ENCODE measurements at regions of chr12 and their contacts with region 1.

Region 1: GRCh38 chr12:109110988-109111495 is 5.3 kb upstream of the ACACB start:
- DNase-seq: peak; percentile 87
- ATAC-seq: peak; percentile 93 to 98
- H3K4me3 ChIP-seq: peak overlapping the region; percentile 44
- H3K27ac ChIP-seq: peak overlapping the region; percentile 85 to 90
- H3K4me1 ChIP-seq: peaks cover 11% of the 10 kb centered on the region
- CTCF ChIP-seq: no peak
- EP300 ChIP-seq: no peak
- POLR2A ChIP-seq: peak; percentile 78
- RAD21 ChIP-seq: no peak

Region 2: DNA sequence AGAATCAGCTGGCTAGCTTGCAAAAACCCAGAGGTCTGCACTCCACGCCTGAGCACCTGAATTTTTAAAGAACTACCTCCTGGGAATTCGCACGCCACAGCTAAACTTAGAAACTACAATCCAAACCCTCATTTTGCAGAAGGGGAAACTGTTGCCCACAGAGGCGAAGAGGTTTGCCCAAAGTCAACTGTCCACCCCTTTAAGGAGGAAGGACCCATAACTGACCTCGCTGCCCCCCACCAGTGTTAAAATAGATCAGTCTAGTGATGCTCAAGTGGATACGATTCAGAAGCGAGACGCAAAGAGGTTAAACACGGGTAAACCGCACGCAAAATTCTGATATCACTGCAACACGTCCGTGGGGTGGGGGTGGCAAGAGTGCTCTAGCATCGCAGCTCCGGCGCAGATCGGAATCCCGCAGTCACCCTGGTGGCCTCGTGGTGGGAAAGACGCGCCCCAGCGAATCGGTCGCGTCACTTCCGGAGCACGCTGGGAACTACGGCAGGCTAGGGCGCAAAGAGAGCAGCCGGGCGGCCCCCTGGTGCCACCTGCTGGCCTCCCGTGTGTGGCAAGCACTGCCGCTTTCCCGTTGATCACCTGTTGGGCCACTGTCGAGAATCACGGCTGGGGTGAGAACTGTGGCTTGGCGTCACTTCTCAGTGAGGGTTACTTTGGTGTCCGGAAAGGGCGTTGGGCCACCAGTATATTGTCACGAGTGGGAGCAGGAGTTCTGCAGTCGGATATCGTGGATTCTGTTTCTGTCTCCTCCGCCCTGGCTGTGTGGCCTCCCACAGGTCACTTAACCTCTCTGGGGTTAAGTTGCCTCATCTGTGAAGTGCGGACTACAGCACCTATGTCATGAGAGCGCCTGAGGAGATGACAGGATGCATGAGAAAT is 17.8 kb before region 1 on chr12 and contains the start of gene ALKBH2:
- CTCF ChIA-PET with region 1: interaction called, 17 read pairs
- POLR2A ChIA-PET with region 1: interaction called, 5 read pairs
- DNase-seq: peak; percentile 93 to 95
- ATAC-seq: peak; percentile 68 to 70
- H3K4me3 ChIP-seq: peak within 1 kb of the TSS; percentile 56
- H3K27ac ChIP-seq: peak within 1 kb of the TSS; percentile 77 to 90
- H3K4me1 ChIP-seq: peaks cover 16% of the 10 kb centered on the region; the same call in 1 of the 3 replicates
- CTCF ChIP-seq: peak; percentile 95
- EP300 ChIP-seq: no peak
- POLR2A ChIP-seq: peak; percentile 94
- RAD21 ChIP-seq: peak; percentile 96
- polyA plus RNA-seq, gene ALKBH2: 48.7 and 53.9 TPM in 2 replicates

Region 3: GRCh38 chr12:109126784-109127183 is 15.7 kb after region 1 on chr12:
- CTCF ChIA-PET with region 1: interaction called, 29 read pairs
- POLR2A ChIA-PET with region 1: interaction called, 5 read pairs
- DNase-seq: no peak
- ATAC-seq: no peak
- H3K4me3 ChIP-seq: no peak overlapping the region
- H3K27ac ChIP-seq: no peak overlapping the region
- H3K4me1 ChIP-seq: peaks cover 8% of the 10 kb centered on the region; the same call in 1 of the 3 replicates
- CTCF ChIP-seq: no peak
- EP300 ChIP-seq: no peak
- POLR2A ChIP-seq: no peak
- RAD21 ChIP-seq: no peak

Region 4: GRCh38 chr12:109189291-109189690 is 78.2 kb after region 1 on chr12:
- CTCF ChIA-PET with region 1: interaction called, 11 read pairs
- POLR2A ChIA-PET with region 1: interaction called, 4 read pairs
- DNase-seq: no peak
- ATAC-seq: no peak
- H3K4me3 ChIP-seq: no peak overlapping the region
- H3K27ac ChIP-seq: 0 out of 6 replicates have a peak overlapping the region, but pooled peaks of 1 of the 2 experiments have one; percentile 15
- H3K4me1 ChIP-seq: peaks cover 39% of the 10 kb centered on the region
- CTCF ChIP-seq: no peak
- EP300 ChIP-seq: no peak
- POLR2A ChIP-seq: no peak
- RAD21 ChIP-seq: no peak

Region 5: GRCh38 chr12:109385339-109386067 is 274.5 kb after region 1 on chr12:
- CTCF ChIA-PET with region 1: interaction called, 58 read pairs
- POLR2A ChIA-PET with region 1: interaction called, 9 read pairs
- DNase-seq: peak; percentile 51 to 64
- ATAC-seq: peak; percentile 74 to 80
- H3K4me3 ChIP-seq: no peak overlapping the region
- H3K27ac ChIP-seq: peak overlapping the region; percentile 46 to 47; a peak in 1 of 6 replicates
- H3K4me1 ChIP-seq: peaks cover 8% of the 10 kb centered on the region; the same call in 2 of the 3 replicates
- CTCF ChIP-seq: peak; percentile 92
- EP300 ChIP-seq: no peak
- POLR2A ChIP-seq: no peak
- RAD21 ChIP-seq: peak; percentile 94 to 97

Measured in A549 (cell line).